HCT116 (cell line): ENCODE measurements at regions of chr12 and their contacts with region 1.

Region 1: DNA sequence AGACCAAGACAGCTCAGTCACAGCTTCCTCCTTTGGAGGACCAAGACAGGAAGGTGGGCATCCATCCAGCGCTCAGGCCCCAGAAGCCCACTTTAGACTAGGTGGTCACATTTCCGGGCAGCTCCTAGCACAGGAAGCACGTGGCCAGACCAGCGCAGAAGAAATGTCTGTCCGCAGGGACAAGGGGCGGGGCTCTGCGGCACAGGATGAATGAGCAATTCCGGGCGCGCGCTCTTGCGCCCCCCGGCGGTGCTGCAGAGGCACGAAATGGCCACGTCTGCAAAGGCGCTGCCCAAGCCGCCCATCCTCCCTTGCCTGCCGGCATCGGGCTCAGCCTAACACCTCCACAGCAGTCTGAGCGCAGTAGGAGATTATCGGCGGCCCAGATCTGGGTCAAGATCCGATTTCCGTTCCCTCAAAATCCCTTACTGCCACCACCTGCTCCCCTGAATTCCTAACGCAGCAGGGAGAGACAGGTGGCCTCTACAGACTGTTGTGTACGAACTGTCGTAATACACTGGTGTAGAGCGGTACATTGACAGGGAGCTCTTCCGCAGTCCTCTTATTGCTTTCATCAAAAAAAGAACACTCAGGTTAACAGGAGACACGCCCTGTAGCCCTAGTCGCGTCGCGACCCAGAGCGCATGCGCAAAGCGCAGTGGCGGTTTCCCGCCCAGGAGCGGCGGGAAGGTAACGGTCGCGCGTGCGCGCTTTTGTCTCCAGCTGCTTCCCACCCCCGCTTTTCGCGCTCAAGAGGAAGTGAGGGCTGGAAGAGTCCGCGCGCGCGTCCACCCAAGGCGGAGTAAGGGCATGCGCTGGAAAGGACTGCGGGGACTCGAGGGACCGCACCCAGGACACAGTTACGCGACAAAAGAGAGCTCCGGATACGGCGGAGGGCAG is 794 bp downstream of the TUBA1B start:
- DNase-seq: peak; percentile 78
- ATAC-seq: peak; percentile 63
- H3K4me3 ChIP-seq: peak overlapping the region; percentile 97
- H3K27ac ChIP-seq: peak overlapping the region; percentile 99
- H3K4me1 ChIP-seq: peaks cover 12 to 37% of the 10 kb centered on the region in 2 experiments; a peak in 3 of 4 replicates
- H3K27me3 ChIP-seq: no peaks in the 10 kb centered on the region
- CTCF ChIP-seq: peak; percentile 62 to 94 (median 89)
- POLR2A ChIP-seq: no peak
- RAD21 ChIP-seq: peak; percentile 46; the same call in 1 of the 2 replicates

Region 2: GRCh38 chr12:48890657-48891418 is 239.6 kb before region 1 on chr12:
- CTCF ChIA-PET with region 1: no interaction called
- POLR2A ChIA-PET with region 1: no interaction called
- RAD21 ChIA-PET with region 1: no interaction called
- intact Hi-C with region 1: no loop called
- DNase-seq: peak; percentile 27
- ATAC-seq: peak; percentile 97
- H3K4me3 ChIP-seq: no peak overlapping the region
- H3K27ac ChIP-seq: no peak overlapping the region
- H3K4me1 ChIP-seq: peaks cover 0 to 12% of the 10 kb centered on the region in 2 experiments; a peak in 2 of 4 replicates
- H3K27me3 ChIP-seq: peaks cover 3% of the 10 kb centered on the region; the same call in 1 of the 2 replicates
- CTCF ChIP-seq: peak; percentile 90 to 93 (median 92)
- POLR2A ChIP-seq: no peak
- RAD21 ChIP-seq: peak; percentile 84

Region 3: GRCh38 chr12:49069507-49070346 is 60.7 kb before region 1 on chr12 and contains the start of gene RHEBL1:
- CTCF ChIA-PET with region 1: interaction called, 4 read pairs
- POLR2A ChIA-PET with region 1: interaction called, 17 read pairs
- RAD21 ChIA-PET with region 1: no interaction called
- intact Hi-C with region 1: loop called (anchors 2 kb)
- DNase-seq: peak; percentile 90
- ATAC-seq: peak; percentile 99
- H3K4me3 ChIP-seq: peak within 1 kb of the TSS; percentile 70 to 71
- H3K27ac ChIP-seq: peak within 1 kb of the TSS; percentile 70
- H3K4me1 ChIP-seq: peaks cover 5 to 15% of the 10 kb centered on the region in 2 experiments
- H3K27me3 ChIP-seq: no peaks in the 10 kb centered on the region
- CTCF ChIP-seq: peak in 2 of 3 experiments; percentile 10 to 25; a peak in 1 of 6 replicates
- POLR2A ChIP-seq: no peak
- RAD21 ChIP-seq: no peak
- total RNA-seq, gene RHEBL1: 2.8 TPM

Region 4: DNA sequence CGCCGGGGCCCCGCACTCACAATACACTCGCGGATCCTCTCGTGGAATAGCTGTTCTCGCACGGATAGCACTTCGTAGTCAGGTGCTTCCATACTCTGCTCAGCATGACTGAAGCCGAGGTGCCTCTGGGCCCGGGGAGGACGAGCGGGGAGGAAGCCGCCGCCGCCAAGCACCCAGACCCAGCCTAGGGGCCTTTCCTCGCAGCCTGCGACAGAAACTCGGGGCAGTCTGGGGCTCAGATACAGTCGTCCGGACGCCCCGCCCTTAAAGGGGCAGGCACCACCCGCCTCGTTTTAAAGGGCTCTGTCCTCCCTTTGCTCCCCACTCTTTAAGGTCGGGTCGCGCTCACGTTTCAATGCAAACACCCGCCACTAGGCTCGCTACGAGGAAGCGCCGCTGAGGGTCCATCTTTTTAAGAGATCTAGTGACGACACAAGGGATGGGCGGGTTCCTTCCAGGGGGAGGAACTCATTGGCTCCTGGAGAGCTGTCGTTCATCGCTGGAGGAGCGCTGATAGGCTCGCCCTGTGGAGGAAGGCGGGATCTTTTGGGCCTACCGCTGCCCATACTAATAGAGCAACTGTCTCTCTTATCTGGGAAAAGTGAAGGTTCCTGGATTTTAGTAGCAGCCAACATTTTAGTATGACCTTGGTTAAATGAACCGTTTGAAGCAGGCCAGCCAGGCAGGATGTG is 19.8 kb before region 1 on chr12 and contains the start of gene LMBR1L:
- CTCF ChIA-PET with region 1: interaction called, 16 read pairs
- POLR2A ChIA-PET with region 1: interaction called, 30 read pairs
- RAD21 ChIA-PET with region 1: no interaction called
- intact Hi-C with region 1: no loop called
- DNase-seq: peak; percentile 96
- ATAC-seq: peak; percentile 98
- H3K4me3 ChIP-seq: peak within 1 kb of the TSS; percentile 90 to 97
- H3K27ac ChIP-seq: peak within 1 kb of the TSS; percentile 62
- H3K4me1 ChIP-seq: peaks cover 6 to 29% of the 10 kb centered on the region in 2 experiments; a peak in 3 of 4 replicates
- H3K27me3 ChIP-seq: no peaks in the 10 kb centered on the region
- CTCF ChIP-seq: peak in 2 of 3 experiments; percentile 20 to 50; a peak in 3 of 6 replicates
- POLR2A ChIP-seq: peak; percentile 63
- RAD21 ChIP-seq: no peak
- total RNA-seq, gene LMBR1L: 44.4 TPM

Region 5: GRCh38 chr12:49188914-49189367 is 58.5 kb after region 1 on chr12 and contains the start of gene TUBA1A:
- CTCF ChIA-PET with region 1: interaction called, 3 read pairs
- POLR2A ChIA-PET with region 1: interaction called, 16 read pairs
- RAD21 ChIA-PET with region 1: no interaction called
- intact Hi-C with region 1: no loop called
- DNase-seq: peak; percentile 92
- ATAC-seq: peak; percentile 84
- H3K4me3 ChIP-seq: peak within 1 kb of the TSS; percentile 76 to 80
- H3K27ac ChIP-seq: peak within 1 kb of the TSS; percentile 83
- H3K4me1 ChIP-seq: peaks cover 12 to 22% of the 10 kb centered on the region in 2 experiments; a peak in 3 of 4 replicates
- H3K27me3 ChIP-seq: no peaks in the 10 kb centered on the region
- CTCF ChIP-seq: no peak
- POLR2A ChIP-seq: peak; percentile 99
- RAD21 ChIP-seq: no peak
- total RNA-seq, gene TUBA1A: 24.1 TPM

Region 6: GRCh38 chr12:49225556-49226181 is 95.3 kb after region 1 on chr12:
- CTCF ChIA-PET with region 1: interaction called, 11 read pairs
- POLR2A ChIA-PET with region 1: interaction called, 6 read pairs
- RAD21 ChIA-PET with region 1: interaction called in 1 of 2 experiments, 3 read pairs
- intact Hi-C with region 1: loop called (anchors 10 kb)
- DNase-seq: no peak
- ATAC-seq: peak; percentile 89
- H3K4me3 ChIP-seq: no peak overlapping the region
- H3K27ac ChIP-seq: no peak overlapping the region
- H3K4me1 ChIP-seq: peaks cover 6 to 13% of the 10 kb centered on the region in 2 experiments; a peak in 3 of 4 replicates
- H3K27me3 ChIP-seq: no peaks in the 10 kb centered on the region
- CTCF ChIP-seq: peak in 1 of 3 experiments; percentile 26; a peak in 2 of 6 replicates
- POLR2A ChIP-seq: no peak
- RAD21 ChIP-seq: peak; percentile 43; the same call in 1 of the 2 replicates

Region 7: DNA sequence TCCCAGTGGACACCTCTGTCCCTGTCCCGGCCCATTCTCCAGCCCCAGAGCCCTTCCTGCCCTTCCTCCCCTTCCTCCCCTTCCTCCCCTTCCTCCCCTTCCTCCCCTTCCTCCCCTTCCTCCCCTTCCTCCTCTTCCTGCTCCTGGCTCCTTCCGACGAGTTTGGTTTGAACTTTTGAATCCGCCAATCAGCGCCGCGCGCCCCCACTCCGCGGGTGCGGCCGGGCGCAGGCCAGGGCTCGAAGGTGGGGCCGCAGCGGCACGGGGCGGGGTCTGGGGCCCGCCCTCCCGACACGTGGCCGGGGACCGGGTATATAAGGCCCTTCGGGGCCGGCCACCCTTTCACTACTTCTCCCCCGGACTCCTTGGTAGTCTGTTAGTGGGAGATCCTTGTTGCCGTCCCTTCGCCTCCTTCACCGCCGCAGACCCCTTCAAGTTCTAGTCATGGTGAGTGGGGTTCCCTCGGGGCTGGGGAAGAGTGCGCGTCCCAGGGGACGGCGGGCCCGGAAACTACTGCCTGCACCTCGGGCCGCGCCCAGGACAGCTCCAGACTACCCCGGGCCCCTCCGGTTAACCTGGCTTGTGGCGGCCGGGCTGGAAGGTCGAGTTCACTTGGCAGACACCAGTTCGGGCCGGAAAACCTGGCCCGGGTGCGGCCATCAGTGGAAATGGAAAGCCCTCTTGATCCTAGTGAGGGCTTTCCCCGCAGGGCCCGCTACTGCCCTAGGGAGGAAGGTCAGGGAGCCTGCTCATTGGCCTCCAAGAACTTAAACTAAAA is 134.5 kb after region 1 on chr12 and contains the start of gene TUBA1C:
- CTCF ChIA-PET with region 1: no interaction called
- POLR2A ChIA-PET with region 1: interaction called, 6 read pairs
- RAD21 ChIA-PET with region 1: no interaction called
- intact Hi-C with region 1: loop called (anchors 1 kb)
- DNase-seq: peak; percentile 94
- ATAC-seq: peak; percentile 85
- H3K4me3 ChIP-seq: peak within 1 kb of the TSS; percentile 88 to 98
- H3K27ac ChIP-seq: peak within 1 kb of the TSS; percentile 99
- H3K4me1 ChIP-seq: peaks cover 23 to 46% of the 10 kb centered on the region in 2 experiments
- H3K27me3 ChIP-seq: no peaks in the 10 kb centered on the region
- CTCF ChIP-seq: no peak
- POLR2A ChIP-seq: peak; percentile 98
- RAD21 ChIP-seq: no peak
- total RNA-seq, gene TUBA1C: 571 TPM